CD8-positive, alpha-beta T cell (primary cell): ENCODE measurements at regions of chr17 and their contacts with region 1.

Region 1: GRCh38 chr17:40707720-40708119 is 4.2 kb upstream of the KRT24 start:
- DNase-seq: no peak
- ATAC-seq: no peak
- H3K4me3 ChIP-seq: no peak overlapping the region
- H3K4me3 Mint-ChIP-seq: no peak overlapping the region
- H3K27ac ChIP-seq: no peak overlapping the region
- H3K27ac Mint-ChIP-seq: no peak overlapping the region
- H3K4me1 ChIP-seq: no peaks in the 10 kb centered on the region
- H3K4me1 Mint-ChIP-seq: no peaks in the 10 kb centered on the region
- H3K27me3 ChIP-seq: no peaks in the 10 kb centered on the region
- H3K27me3 Mint-ChIP-seq: peaks cover 27% of the 10 kb centered on the region
- CTCF ChIP-seq: no peak

Region 2: DNA sequence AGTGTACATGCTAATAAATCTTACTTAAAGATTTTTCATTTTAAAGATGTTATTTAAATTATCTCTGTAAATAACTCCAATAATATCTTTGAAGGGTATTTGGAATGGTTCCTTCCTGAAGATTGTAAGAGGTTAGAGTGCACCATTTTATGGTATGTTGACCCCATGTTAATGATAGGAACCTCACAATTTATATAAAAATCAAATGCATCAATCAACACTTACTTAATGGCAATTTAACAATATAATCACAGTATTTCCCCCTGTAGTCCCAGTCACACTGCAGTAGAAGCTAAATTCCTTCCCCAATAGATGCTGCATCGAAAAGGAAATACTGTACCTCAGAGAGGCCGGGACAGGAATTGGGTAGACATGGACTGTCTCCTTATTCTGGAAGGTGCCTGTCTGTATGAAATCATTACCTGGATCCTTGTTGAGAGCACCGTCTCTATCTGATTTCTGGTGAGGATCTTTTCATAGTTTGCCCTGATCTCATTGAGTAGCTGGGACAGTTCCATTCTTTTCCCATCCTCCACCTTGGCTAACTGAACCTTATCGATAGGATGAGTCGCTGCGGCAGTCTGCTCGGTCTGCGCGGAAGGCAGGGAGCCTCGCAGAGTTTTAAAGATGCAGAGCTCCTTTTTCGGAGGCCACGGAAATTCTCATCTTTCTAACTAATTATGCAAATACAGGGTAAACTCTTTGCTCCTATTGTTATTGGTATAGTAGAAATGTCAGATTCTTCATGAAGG is 43.0 kb before region 1 on chr17 and contains the start of gene KRT222:
- CTCF ChIA-PET with region 1: no interaction called
- POLR2A ChIA-PET with region 1: no interaction called
- intact Hi-C with region 1: loop called in 1 of 2 experiments (anchors 5 kb)
- DNase-seq: no peak
- ATAC-seq: no peak
- H3K4me3 ChIP-seq: no peak within 1 kb of the TSS
- H3K4me3 Mint-ChIP-seq: peak within 1 kb of the TSS; percentile 26
- H3K27ac ChIP-seq: no peak within 1 kb of the TSS
- H3K27ac Mint-ChIP-seq: no peak within 1 kb of the TSS
- H3K4me1 ChIP-seq: peaks cover 5% of the 10 kb centered on the region
- H3K4me1 Mint-ChIP-seq: peaks cover 11% of the 10 kb centered on the region
- H3K27me3 ChIP-seq: no peaks in the 10 kb centered on the region
- H3K27me3 Mint-ChIP-seq: peaks cover 27% of the 10 kb centered on the region
- CTCF ChIP-seq: no peak
- total RNA-seq, gene KRT222: not detected